ENCODE measurements at regions of chr1 and their contacts with region 1.

Region 1: GRCh38 chr1:182839209-182840065 is at the start of gene DHX9:
- DNase-seq: peak; percentile 89 to 98 (median 94)
- ATAC-seq: peak; percentile 85 to 89 (median 88)
- H3K4me3 ChIP-seq: peak within 1 kb of the TSS; percentile 64 to 92
- H3K4me3 Mint-ChIP-seq: peak within 1 kb of the TSS; percentile 93 to 97 (median 96)
- H3K27ac ChIP-seq: peak within 1 kb of the TSS; percentile 87
- H3K27ac Mint-ChIP-seq: peak within 1 kb of the TSS; percentile 96 to 97
- H3K4me1 ChIP-seq: peaks cover 21 to 30% of the 10 kb centered on the region in 2 experiments
- H3K4me1 Mint-ChIP-seq: peaks cover 46 to 53% (median 51%) of the 10 kb centered on the region in 3 donors
- H3K27me3 ChIP-seq: no peaks in the 10 kb centered on the region
- H3K27me3 Mint-ChIP-seq: peaks cover 0 to 2% of the 10 kb centered on the region in 2 donors
- total RNA-seq, gene DHX9: 180 to 264 (median 193) TPM

Region 2: DNA sequence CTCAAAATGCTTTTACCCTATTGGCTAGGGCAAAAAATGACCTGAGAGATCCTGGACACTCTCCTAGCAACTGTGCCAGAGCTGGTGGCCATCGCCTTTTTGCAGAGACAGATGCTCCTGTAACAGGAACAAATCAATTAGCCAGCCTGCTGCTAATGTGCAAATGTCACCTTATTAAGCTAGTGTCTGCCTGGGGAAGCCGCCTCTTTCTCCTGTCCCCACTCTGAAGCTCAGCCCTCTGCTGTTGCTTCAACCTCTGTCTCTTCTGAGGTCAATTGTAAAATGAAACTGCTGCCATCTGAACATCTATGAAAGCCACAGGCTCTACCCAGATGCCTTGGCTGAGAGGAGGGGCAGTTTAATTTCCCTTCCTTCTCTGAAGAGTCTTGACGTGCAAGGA is 1441.6 kb before region 1 on chr1:
- CTCF ChIA-PET with region 1: interaction called in 1 of 2 experiments, 3 read pairs
- POLR2A ChIA-PET with region 1: interaction called in 1 of 2 experiments, 14 read pairs
- DNase-seq: peak in 29 of 35 experiments; percentile 3 to 58 (median 19)
- ATAC-seq: peak; percentile 31 to 54 (median 35)
- H3K4me3 ChIP-seq: no peak overlapping the region
- H3K4me3 Mint-ChIP-seq: peak overlapping the region in 2 of 3 donors; percentile 49 to 52
- H3K27ac ChIP-seq: peak overlapping the region; percentile 66
- H3K27ac Mint-ChIP-seq: no peak overlapping the region
- H3K4me1 ChIP-seq: peaks cover 45 to 63% of the 10 kb centered on the region in 2 experiments
- H3K4me1 Mint-ChIP-seq: peaks cover 19 to 46% (median 21%) of the 10 kb centered on the region in 3 donors
- H3K27me3 ChIP-seq: peaks cover 0 to 5% of the 10 kb centered on the region in 2 experiments
- H3K27me3 Mint-ChIP-seq: no peaks in the 10 kb centered on the region

Region 3: DNA sequence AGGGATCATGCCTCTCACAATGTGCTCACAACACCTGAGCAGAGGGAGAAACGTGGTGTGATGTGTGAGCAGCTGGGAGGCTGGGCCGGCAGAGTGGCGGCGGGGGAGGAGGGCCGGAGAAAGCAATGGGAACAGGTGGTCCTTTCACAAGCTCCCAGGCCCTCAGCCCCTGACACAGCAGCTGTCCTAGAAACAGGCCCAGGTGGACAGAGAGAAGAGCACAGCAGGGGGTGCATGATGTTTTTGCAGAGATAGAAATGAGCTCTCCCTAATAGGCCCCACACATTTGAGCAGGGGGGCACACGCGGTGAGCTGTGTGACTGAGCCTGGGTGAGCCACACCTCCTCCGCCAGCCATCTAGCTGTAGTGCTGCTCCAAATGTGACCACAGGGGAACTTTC is 227.7 kb before region 1 on chr1:
- CTCF ChIA-PET with region 1: no interaction called
- POLR2A ChIA-PET with region 1: no interaction called
- DNase-seq: no peak
- ATAC-seq: no peak
- H3K4me3 ChIP-seq: no peak overlapping the region
- H3K4me3 Mint-ChIP-seq: no peak overlapping the region
- H3K27ac ChIP-seq: no peak overlapping the region
- H3K27ac Mint-ChIP-seq: no peak overlapping the region
- H3K4me1 ChIP-seq: peaks cover 19 to 30% of the 10 kb centered on the region in 2 experiments
- H3K4me1 Mint-ChIP-seq: peaks cover 28 to 32% (median 31%) of the 10 kb centered on the region in 3 donors
- H3K27me3 ChIP-seq: peaks cover 12 to 49% of the 10 kb centered on the region in 2 experiments
- H3K27me3 Mint-ChIP-seq: peaks cover 33 to 35% of the 10 kb centered on the region in 2 donors

Region 4: DNA sequence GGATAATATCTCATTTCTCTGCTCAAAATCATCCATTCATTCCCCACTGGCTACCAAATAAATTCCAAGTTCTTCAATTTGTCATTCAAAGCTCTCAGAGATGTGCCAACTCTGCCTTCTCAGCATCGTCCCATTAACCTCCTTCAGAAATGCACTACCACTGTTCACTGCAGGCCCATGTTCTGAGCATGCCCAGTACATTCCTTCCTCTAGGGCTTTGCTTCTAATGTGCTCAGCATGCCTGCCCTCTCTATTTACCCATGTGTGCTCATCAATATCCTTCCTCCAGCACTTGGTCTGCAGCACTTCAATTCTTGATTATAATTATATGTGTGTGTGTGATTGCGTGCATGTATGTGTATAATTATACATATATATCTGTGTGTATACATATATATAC is 119.0 kb before region 1 on chr1:
- CTCF ChIA-PET with region 1: no interaction called
- POLR2A ChIA-PET with region 1: no interaction called
- DNase-seq: no peak
- ATAC-seq: no peak
- H3K4me3 ChIP-seq: no peak overlapping the region
- H3K4me3 Mint-ChIP-seq: no peak overlapping the region
- H3K27ac ChIP-seq: no peak overlapping the region
- H3K27ac Mint-ChIP-seq: no peak overlapping the region
- H3K4me1 ChIP-seq: peaks cover 3 to 6% of the 10 kb centered on the region in 2 experiments
- H3K4me1 Mint-ChIP-seq: peaks cover 8 to 13% (median 9%) of the 10 kb centered on the region in 3 donors
- H3K27me3 ChIP-seq: no peaks in the 10 kb centered on the region
- H3K27me3 Mint-ChIP-seq: no peaks in the 10 kb centered on the region

Region 5: GRCh38 chr1:182855911-182856310 is 16.5 kb after region 1 on chr1:
- CTCF ChIA-PET with region 1: interaction called in 1 of 2 experiments, 3 read pairs
- POLR2A ChIA-PET with region 1: interaction called, 10 to 16 read pairs
- DNase-seq: no peak
- ATAC-seq: no peak
- H3K4me3 ChIP-seq: no peak overlapping the region
- H3K4me3 Mint-ChIP-seq: no peak overlapping the region
- H3K27ac ChIP-seq: no peak overlapping the region
- H3K27ac Mint-ChIP-seq: no peak overlapping the region
- H3K4me1 ChIP-seq: no peaks in the 10 kb centered on the region
- H3K4me1 Mint-ChIP-seq: peaks cover 3 to 28% (median 11%) of the 10 kb centered on the region in 3 donors
- H3K27me3 ChIP-seq: no peaks in the 10 kb centered on the region
- H3K27me3 Mint-ChIP-seq: no peaks in the 10 kb centered on the region

Region 6: DNA sequence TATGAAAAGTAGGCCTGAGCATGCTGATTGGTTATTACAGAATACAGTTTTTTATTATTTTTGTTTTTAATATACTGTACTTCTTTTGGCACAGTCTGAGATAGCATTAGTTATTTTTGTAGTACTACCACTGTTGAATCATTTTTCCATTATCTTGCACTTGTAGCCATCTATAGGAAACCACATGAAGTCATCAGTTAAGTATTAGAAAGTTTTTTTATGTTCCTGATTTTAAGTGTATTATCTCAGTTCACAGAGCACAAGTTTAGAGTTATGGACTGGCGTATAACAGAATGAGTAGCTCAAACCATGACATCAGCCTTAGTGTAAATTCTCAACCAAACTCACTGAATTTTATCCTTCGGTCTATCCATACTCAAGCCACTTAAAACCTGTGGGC is 22.6 kb after region 1 on chr1:
- CTCF ChIA-PET with region 1: no interaction called
- POLR2A ChIA-PET with region 1: interaction called, 10 to 14 read pairs
- DNase-seq: no peak
- ATAC-seq: no peak
- H3K4me3 ChIP-seq: no peak overlapping the region
- H3K4me3 Mint-ChIP-seq: no peak overlapping the region
- H3K27ac ChIP-seq: no peak overlapping the region
- H3K27ac Mint-ChIP-seq: no peak overlapping the region
- H3K4me1 ChIP-seq: no peaks in the 10 kb centered on the region
- H3K4me1 Mint-ChIP-seq: peaks cover 10 to 26% (median 15%) of the 10 kb centered on the region in 3 donors
- H3K27me3 ChIP-seq: no peaks in the 10 kb centered on the region
- H3K27me3 Mint-ChIP-seq: no peaks in the 10 kb centered on the region